Upper lobe of right lung (tissue), 1 donor: ENCODE measurements at regions of chr17 and their contacts with region 1.

Region 1: GRCh38 chr17:5237541-5238016 is 2.9 kb upstream of the SCIMP start:
- DNase-seq: peak; percentile 69
- ATAC-seq: peak; percentile 90
- H3K4me3 ChIP-seq: no peak overlapping the region
- H3K27ac ChIP-seq: no peak overlapping the region
- H3K4me1 ChIP-seq: no peaks in the 10 kb centered on the region
- H3K27me3 ChIP-seq: no peaks in the 10 kb centered on the region
- CTCF ChIP-seq: peak; percentile 74

Region 2: DNA sequence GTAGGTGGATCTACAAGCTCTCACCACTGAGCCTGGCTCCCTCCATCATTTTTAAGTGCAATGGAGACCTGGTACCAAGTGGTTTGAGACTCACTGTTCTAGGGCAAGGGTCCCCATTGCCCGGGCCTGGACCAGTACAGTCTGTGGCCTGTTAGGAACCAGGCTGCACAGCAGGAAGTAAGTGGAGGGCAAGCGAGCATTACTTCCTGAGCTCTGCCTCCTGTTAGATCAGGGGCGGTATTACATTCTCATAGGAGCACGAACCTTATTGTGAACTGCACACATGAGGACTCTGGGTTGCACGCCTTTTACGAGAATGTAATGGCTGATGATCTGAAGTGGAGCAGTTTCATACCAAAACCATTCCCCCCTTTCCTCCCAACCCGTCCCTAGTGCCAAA is 39.1 kb before region 1 on chr17:
- intact Hi-C with region 1: loop called (anchors 5 kb)
- DNase-seq: no peak
- ATAC-seq: no peak
- H3K4me3 ChIP-seq: no peak overlapping the region
- H3K27ac ChIP-seq: no peak overlapping the region
- H3K4me1 ChIP-seq: no peaks in the 10 kb centered on the region
- H3K27me3 ChIP-seq: no peaks in the 10 kb centered on the region
- CTCF ChIP-seq: no peak